Transverse colon (tissue), 4 donors: ENCODE measurements at regions of chr2 and their contacts with region 1.

Region 1: GRCh38 chr2:148509288-148509902 is 135.2 kb upstream of the EPC2 start:
- DNase-seq: peak; percentile 84
- H3K4me3 ChIP-seq: peak overlapping the region in 2 of 4 donors; percentile 11 to 32
- H3K27ac ChIP-seq: no peak overlapping the region
- H3K4me1 ChIP-seq: peaks cover 0 to 8% (median 2%) of the 10 kb centered on the region in 4 donors
- H3K27me3 ChIP-seq: no peaks in the 10 kb centered on the region
- CTCF ChIP-seq: peak; percentile 73 to 88 (median 83)
- EP300 ChIP-seq: no peak
- POLR2A ChIP-seq: no peak

Region 2: GRCh38 chr2:147937744-147938349 is 571.5 kb before region 1 on chr2:
- in situ Hi-C with region 1: loop called in 1 of 4 experiments (anchors 25 kb)
- intact Hi-C with region 1: loop called (anchors 5 kb)
- DNase-seq: no peak
- H3K4me3 ChIP-seq: no peak overlapping the region
- H3K27ac ChIP-seq: no peak overlapping the region
- H3K4me1 ChIP-seq: peaks cover 0 to 13% (median 3%) of the 10 kb centered on the region in 4 donors
- H3K27me3 ChIP-seq: no peaks in the 10 kb centered on the region
- CTCF ChIP-seq: peak; percentile 77 to 88 (median 83)
- EP300 ChIP-seq: no peak
- POLR2A ChIP-seq: no peak

Region 3: DNA sequence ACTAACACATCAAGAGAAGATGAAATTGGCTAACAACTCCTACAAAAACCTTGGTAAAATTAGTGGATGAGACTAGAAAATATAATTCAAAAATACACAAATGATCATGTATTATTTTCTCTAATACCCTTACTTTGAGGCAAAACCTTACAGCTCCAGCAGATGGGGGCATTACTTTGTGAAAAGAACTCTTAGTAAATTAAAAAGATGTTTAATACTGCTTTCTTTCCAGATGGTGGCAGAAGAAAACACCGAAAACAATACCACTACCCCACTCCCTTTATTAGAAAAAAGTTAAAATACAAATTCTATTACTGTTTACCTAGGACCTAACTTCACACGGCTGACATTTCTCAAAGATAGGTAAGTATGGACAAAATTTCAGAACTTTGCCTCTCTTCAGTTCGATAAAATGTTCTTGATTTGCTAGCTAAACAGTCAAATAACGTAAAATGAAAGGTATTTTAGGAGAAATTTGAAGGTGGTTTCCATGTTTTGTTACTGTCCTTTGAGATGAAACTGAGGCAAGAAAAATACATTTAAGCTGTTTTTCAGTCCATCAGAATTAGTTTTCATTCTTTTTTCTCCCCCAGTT is 519.5 kb before region 1 on chr2:
- in situ Hi-C with region 1: loop called in 3 of 4 experiments (anchors 25 kb)
- intact Hi-C with region 1: no loop called
- DNase-seq: no peak
- H3K4me3 ChIP-seq: no peak overlapping the region
- H3K27ac ChIP-seq: no peak overlapping the region
- H3K4me1 ChIP-seq: no peaks in the 10 kb centered on the region
- H3K27me3 ChIP-seq: no peaks in the 10 kb centered on the region
- CTCF ChIP-seq: peak; percentile 44 to 59 (median 46)
- EP300 ChIP-seq: no peak
- POLR2A ChIP-seq: no peak